Common myeloid progenitor, CD34-positive (primary cell): ENCODE measurements at regions of chr10 and their contacts with region 1.

Region 1: DNA sequence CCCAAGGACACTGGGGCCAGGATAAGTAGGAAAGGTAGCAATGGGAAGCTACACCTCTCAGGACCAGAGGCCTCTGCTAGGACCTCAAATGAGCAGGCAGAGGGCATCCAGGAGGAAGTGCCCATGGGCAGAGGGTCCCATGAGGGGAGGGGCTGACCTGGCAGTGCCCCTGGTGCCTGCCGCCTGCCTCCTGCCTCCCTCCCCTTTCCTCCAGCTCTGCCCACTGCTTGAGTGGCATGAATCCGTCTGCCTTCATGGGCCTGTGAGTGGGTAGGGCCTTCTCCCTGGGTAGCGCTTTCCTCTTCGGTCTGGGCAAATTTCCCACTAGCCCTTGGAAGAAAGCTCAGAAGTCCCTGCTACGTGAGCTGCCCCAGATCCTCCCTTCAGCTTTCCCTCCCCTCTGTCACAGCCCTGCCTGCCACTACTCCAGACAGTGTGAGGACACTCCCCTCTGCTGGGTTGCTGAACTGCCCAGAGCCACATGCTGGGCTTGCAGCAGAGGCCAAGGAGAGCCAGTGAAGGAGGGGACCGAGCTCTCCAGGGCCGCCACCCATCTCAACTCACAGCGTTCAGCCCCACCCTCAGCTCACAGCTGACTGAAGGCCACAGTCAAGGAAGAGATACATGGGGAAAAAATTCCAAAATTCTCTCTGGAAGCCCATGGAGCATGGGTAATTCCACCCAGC is 141.4 kb downstream of the ARHGAP22 start:
- DNase-seq: peak in 2 of 3 donors; percentile 21 to 33
- H3K4me3 ChIP-seq: no peak overlapping the region
- H3K27ac ChIP-seq: peak overlapping the region; percentile 43 to 84
- H3K4me1 ChIP-seq: peaks cover 0 to 95% (median 80%) of the 10 kb centered on the region in 4 experiments
- H3K27me3 ChIP-seq: no peaks in the 10 kb centered on the region

Region 2: GRCh38 chr10:48496831-48497779 is 33.6 kb after region 1 on chr10:
- CTCF ChIA-PET with region 1: interaction called, 615 read pairs
- POLR2A ChIA-PET with region 1: interaction called, 6 read pairs
- DNase-seq: peak in 2 of 3 donors; percentile 61 to 73
- H3K4me3 ChIP-seq: peak overlapping the region in 3 of 7 experiments; percentile 20 to 49 (median 24)
- H3K27ac ChIP-seq: peak overlapping the region in 1 of 2 experiments; percentile 59
- H3K4me1 ChIP-seq: peaks cover 4 to 87% (median 85%) of the 10 kb centered on the region in 4 experiments
- H3K27me3 ChIP-seq: no peaks in the 10 kb centered on the region

Region 3: GRCh38 chr10:48551861-48552591 is 88.6 kb after region 1 on chr10:
- CTCF ChIA-PET with region 1: no interaction called
- POLR2A ChIA-PET with region 1: no interaction called
- DNase-seq: peak; percentile 66 to 83 (median 79)
- H3K4me3 ChIP-seq: peak overlapping the region in 1 of 7 experiments; percentile 17
- H3K27ac ChIP-seq: no peak overlapping the region
- H3K4me1 ChIP-seq: peaks cover 0 to 11% (median 6%) of the 10 kb centered on the region in 4 experiments
- H3K27me3 ChIP-seq: no peaks in the 10 kb centered on the region